ENCODE measurements at regions of chr12 and their contacts with region 1.

Region 1: GRCh38 chr12:30695199-30696103 is at the start of gene IPO8:
- DNase-seq: peak; percentile 89
- H3K4me3 Mint-ChIP-seq: peak within 1 kb of the TSS; percentile 93
- H3K27ac Mint-ChIP-seq: peak within 1 kb of the TSS; percentile 92
- H3K4me1 Mint-ChIP-seq: peaks cover 38% of the 10 kb centered on the region
- H3K27me3 Mint-ChIP-seq: peaks cover 2% of the 10 kb centered on the region
- total RNA-seq, gene IPO8: 36.0 to 41.5 TPM

Region 2: DNA sequence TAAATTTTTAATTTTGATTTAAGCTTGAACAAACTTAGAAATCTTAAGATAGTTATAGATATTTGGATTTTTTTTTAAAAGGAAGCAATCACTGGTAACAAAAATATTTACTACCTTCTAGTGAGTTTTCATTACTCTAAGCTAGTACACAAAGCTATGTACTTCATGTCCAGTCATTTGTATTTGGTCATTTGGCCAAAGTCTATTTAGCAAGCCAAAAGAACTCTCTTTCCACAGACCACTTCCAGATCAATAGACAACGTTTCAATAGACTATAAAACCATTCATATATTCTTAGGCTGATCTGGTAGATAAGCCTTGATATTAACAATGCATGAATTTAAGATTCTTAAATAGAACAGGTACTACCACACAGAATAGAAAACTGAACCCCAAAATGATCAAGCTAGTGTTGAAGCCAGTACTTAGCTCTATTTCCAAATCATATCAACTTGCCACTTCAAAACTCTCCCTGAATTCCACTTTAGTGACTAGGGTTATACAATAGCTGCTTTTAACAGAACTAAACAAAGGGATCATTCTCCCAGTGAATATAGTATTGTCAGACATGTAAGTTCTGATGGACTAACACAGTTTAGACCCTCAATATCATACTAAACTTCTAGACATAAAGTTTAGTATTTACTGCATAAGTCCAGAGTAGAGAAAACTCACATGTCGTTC is 37.6 kb after region 1 on chr12:
- CTCF ChIA-PET with region 1: no interaction called
- intact Hi-C with region 1: no loop called
- DNase-seq: no peak
- H3K4me3 Mint-ChIP-seq: no peak overlapping the region
- H3K27ac Mint-ChIP-seq: no peak overlapping the region
- H3K4me1 Mint-ChIP-seq: no peaks in the 10 kb centered on the region
- H3K27me3 Mint-ChIP-seq: no peaks in the 10 kb centered on the region

Region 3: DNA sequence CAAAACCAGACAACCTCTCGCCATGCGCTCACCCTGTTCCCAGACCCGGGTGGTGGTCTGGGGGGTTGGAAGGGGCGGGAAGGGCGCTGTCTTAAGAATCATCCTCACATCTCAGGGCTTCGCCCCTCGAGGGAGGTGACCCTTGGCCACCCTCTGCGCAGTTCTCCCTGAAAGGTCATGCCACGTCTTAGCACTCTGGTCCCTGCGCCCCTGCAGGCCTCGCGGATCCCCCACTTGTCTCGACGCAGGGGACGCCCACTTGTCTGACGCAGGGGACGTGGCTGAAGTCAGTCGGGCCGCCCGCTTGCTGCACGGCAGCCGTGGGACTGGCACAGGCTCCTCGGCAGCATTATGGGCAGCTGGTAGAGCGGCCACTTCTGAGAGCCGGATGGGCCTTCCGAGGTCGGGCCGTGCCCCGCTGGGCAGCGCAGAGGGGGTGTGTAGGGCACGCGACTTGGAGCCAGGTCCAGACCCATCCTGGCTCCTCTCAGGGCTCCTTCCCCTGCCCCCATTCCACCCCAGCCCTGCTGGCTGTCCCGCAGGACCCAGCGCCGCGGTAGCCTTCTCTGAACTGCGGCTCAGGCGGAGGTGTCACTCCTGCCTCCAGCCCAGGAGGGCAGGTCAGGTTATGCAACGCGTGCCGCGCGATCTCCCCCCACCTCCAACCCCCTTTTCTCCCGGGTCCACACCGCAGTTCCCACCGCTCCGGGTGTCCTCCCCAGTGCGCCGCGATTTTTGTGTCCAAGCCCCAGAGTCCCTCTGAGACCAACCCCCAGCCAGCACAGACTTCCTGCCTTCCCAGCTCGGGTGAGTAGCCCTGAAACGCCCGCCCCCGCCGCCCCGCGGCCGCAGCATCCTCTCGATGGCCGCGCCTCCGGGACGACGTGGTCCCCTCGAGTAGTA is 100.2 kb after region 1 on chr12:
- CTCF ChIA-PET with region 1: no interaction called
- intact Hi-C with region 1: loop called (anchors 2 kb)
- DNase-seq: peak; percentile 73
- H3K4me3 Mint-ChIP-seq: peak overlapping the region; percentile 57
- H3K27ac Mint-ChIP-seq: no peak overlapping the region
- H3K4me1 Mint-ChIP-seq: peaks cover 14% of the 10 kb centered on the region
- H3K27me3 Mint-ChIP-seq: peaks cover 41% of the 10 kb centered on the region

Region 4: GRCh38 chr12:31205054-31205453 is 509.6 kb after region 1 on chr12:
- CTCF ChIA-PET with region 1: no interaction called
- intact Hi-C with region 1: loop called (anchors 10 kb)
- DNase-seq: no peak
- H3K4me3 Mint-ChIP-seq: no peak overlapping the region
- H3K27ac Mint-ChIP-seq: peak overlapping the region; percentile 14
- H3K4me1 Mint-ChIP-seq: peaks cover 23% of the 10 kb centered on the region
- H3K27me3 Mint-ChIP-seq: peaks cover 15% of the 10 kb centered on the region

Measured in activated naive CD4-positive, alpha-beta T cell treated with anti-CD3 and anti-CD28 coated beads for 36 hours (primary cell).